Endothelial cell of umbilical vein (primary cell): ENCODE measurements at regions of chr6 and their contacts with region 1.

Region 1: DNA sequence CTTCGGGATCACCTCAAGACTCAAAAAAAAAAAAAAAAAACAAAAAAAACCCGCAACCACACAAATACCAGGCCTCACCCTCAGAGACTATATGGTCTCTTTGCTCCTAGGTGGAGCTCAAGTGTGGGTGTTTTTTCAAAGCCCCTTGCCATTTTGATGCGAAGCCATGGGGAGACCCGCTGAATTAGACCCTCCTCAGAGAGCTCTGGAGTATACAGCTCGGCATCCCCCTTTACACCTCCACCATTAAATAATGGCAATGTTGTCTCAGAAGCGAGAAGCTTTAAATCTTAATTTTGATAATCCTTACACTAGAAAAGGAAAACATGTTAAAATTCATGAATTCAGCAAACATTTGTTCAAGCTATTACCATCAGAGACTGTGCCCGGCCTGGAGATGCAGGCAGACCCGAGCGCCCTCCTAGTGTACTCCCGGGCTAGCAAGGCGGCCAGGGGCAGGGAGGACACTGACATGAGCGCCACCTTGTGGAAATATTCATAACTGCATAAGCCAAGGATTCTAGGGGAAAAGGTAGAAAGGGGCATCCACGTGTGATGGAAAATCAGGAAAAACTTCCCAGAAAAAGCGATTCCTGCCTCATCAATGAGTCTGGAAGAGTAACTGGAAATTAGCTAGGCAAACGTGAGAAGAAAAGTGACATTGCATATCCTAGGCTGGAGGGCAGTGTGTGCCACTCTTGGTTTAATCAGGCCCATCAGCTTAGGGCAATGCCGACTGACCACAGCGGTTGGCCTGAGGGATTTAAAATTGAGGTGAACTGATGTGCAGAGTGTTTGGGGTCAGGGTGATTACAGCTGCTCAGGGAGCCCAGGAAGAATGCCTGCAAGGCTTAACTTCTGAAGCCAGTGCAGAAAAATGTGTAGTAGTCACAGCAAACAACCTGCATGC is 72.5 kb downstream of the B3GAT2 start:
- DNase-seq: peak; percentile 55
- H3K4me3 ChIP-seq: no peak overlapping the region
- H3K27ac ChIP-seq: no peak overlapping the region
- H3K4me1 ChIP-seq: no peaks in the 10 kb centered on the region
- H3K27me3 ChIP-seq: peaks cover 2% of the 10 kb centered on the region in 2 experiments
- CTCF ChIP-seq: peak; percentile 74
- POLR2A ChIP-seq: no peak

Region 2: GRCh38 chr6:70221025-70221714 is 663.2 kb before region 1 on chr6:
- CTCF ChIA-PET with region 1: interaction called, 15 read pairs
- POLR2A ChIA-PET with region 1: no interaction called
- dilution Hi-C with region 1: no loop called
- intact Hi-C with region 1: loop called (anchors 10 kb)
- DNase-seq: peak; percentile 32
- H3K4me3 ChIP-seq: no peak overlapping the region
- H3K27ac ChIP-seq: no peak overlapping the region
- H3K4me1 ChIP-seq: no peaks in the 10 kb centered on the region
- H3K27me3 ChIP-seq: no peaks in the 10 kb centered on the region
- CTCF ChIP-seq: peak; percentile 32 to 35
- POLR2A ChIP-seq: no peak

Region 3: DNA sequence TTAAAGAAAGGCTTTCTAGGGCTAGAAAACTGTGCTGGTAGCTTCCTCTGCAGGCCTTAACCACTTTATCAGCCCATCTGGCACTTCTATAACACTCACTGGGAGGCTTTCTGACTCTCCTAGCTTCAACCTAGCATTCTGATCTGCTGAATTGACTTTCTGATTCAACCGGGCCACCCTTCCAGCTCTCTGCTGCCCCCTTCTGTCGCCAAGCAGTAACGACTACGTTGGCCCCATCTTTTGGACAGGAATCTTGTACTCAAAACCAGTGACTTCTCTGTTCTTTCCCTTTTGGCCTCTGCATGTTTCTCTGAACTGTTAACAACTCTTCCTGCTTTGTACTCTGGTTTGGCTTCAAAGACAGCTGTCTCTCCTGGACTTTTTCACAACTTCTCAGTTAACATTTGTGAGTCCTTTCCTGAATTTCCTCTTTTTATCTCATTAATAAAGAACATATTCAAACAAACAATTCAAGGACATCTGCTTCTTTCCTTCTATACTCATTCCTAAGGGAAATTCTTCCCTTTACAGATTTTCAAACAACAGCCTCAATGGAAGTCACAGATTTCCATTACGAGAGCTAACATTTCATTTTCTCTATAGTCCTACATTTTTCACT is 514.9 kb before region 1 on chr6:
- CTCF ChIA-PET with region 1: interaction called, 4 read pairs
- POLR2A ChIA-PET with region 1: no interaction called
- dilution Hi-C with region 1: no loop called
- intact Hi-C with region 1: loop called (anchors 10 kb)
- DNase-seq: peak; percentile 68
- H3K4me3 ChIP-seq: no peak overlapping the region
- H3K27ac ChIP-seq: no peak overlapping the region
- H3K4me1 ChIP-seq: no peaks in the 10 kb centered on the region
- H3K27me3 ChIP-seq: peaks cover 7 to 24% of the 10 kb centered on the region in 2 experiments
- CTCF ChIP-seq: peak; percentile 91 to 92
- POLR2A ChIP-seq: no peak

Region 4: DNA sequence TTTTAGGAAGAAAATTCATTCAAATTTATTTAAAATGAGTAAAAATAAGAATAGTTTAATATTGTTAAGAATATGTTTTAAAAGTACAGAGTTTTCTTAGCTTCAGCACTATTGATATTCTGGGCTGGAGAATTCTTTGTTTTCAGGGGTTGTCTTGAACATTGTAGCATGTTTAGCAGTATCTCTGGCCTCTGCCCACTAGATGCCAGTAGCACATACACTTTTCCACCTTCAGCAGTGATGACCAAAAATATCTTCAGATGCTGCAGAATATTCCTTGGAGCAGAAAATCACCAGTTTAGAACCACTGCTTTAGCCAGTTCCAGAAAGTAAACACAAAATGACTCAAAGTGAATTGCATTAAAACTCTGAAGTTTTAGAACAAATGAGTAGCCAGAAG is 337.0 kb before region 1 on chr6:
- CTCF ChIA-PET with region 1: no interaction called
- POLR2A ChIA-PET with region 1: no interaction called
- dilution Hi-C with region 1: no loop called
- intact Hi-C with region 1: loop called (anchors 1 kb)
- DNase-seq: peak; percentile 17
- H3K4me3 ChIP-seq: no peak overlapping the region
- H3K27ac ChIP-seq: no peak overlapping the region
- H3K4me1 ChIP-seq: no peaks in the 10 kb centered on the region
- H3K27me3 ChIP-seq: no peaks in the 10 kb centered on the region
- CTCF ChIP-seq: peak; percentile 9 to 32
- POLR2A ChIP-seq: no peak

Region 5: GRCh38 chr6:70706491-70707123 is 177.7 kb before region 1 on chr6:
- CTCF ChIA-PET with region 1: interaction called, 118 read pairs
- POLR2A ChIA-PET with region 1: no interaction called
- dilution Hi-C with region 1: no loop called
- intact Hi-C with region 1: loop called (anchors 1 kb)
- DNase-seq: peak; percentile 60
- H3K4me3 ChIP-seq: no peak overlapping the region
- H3K27ac ChIP-seq: no peak overlapping the region
- H3K4me1 ChIP-seq: peaks cover 10% of the 10 kb centered on the region
- H3K27me3 ChIP-seq: no peaks in the 10 kb centered on the region
- CTCF ChIP-seq: peak; percentile 23 to 30
- POLR2A ChIP-seq: no peak

Region 6: DNA sequence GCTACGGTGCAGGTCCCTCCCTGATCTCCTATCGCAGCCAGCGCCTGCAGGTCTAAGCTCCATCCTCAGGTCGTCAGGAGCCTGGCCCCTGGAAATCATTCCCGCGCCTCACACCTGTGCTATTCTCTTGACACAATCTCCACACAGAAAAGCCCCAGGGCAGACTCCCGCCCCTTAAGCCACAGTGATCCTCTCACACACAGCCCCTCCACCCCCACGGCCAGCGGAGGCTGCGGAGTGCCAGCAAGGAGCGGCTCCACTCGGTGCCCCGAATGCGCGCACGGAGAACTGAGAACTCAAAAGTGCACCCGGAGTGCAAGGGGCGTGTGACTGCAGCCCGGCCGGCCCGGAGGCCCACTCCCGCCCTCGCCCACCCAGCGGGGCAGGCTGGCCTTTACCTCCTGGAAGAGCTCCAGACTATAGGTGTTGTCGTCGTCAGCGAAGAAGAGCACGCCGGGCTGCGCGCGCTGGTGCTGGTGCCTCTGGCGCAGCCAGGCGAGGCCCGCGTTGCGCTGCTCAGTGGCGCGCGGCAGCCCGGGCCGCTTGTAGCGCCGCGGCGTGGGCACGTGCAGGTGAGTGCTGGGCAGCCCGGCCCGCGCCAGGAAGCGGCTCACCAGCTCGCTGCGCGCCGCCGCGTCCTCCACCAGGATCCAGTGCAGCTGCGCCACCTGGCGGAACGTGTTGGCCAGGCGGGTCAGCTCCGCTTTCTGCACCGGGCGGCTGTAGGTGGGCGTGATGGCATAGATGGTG is 71.3 kb after region 1 on chr6:
- CTCF ChIA-PET with region 1: interaction called, 12 read pairs
- POLR2A ChIA-PET with region 1: no interaction called
- dilution Hi-C with region 1: no loop called
- intact Hi-C with region 1: loop called (anchors 1 kb)
- DNase-seq: peak; percentile 65
- H3K4me3 ChIP-seq: peak overlapping the region in 2 of 3 experiments; percentile 13 to 31
- H3K27ac ChIP-seq: no peak overlapping the region
- H3K4me1 ChIP-seq: peaks cover 14% of the 10 kb centered on the region
- H3K27me3 ChIP-seq: peaks cover 36 to 72% of the 10 kb centered on the region in 2 experiments
- CTCF ChIP-seq: peak; percentile 84 to 94
- POLR2A ChIP-seq: no peak